ENCODE measurements at regions of chr7 and their contacts with region 1.

Region 1: GRCh38 chr7:50369143-50370026 is 64.9 kb downstream of the IKZF1 start:
- DNase-seq: peak; percentile 61
- H3K4me3 Mint-ChIP-seq: no peak overlapping the region
- H3K27ac Mint-ChIP-seq: peak overlapping the region; percentile 76
- H3K4me1 Mint-ChIP-seq: peaks cover 97% of the 10 kb centered on the region
- H3K27me3 Mint-ChIP-seq: no peaks in the 10 kb centered on the region

Region 2: GRCh38 chr7:50261593-50261992 is 107.8 kb before region 1 on chr7:
- CTCF ChIA-PET with region 1: no interaction called
- DNase-seq: peak; percentile 40
- H3K4me3 Mint-ChIP-seq: no peak overlapping the region
- H3K27ac Mint-ChIP-seq: peak overlapping the region; percentile 99
- H3K4me1 Mint-ChIP-seq: peaks cover 77% of the 10 kb centered on the region
- H3K27me3 Mint-ChIP-seq: no peaks in the 10 kb centered on the region

Region 3: DNA sequence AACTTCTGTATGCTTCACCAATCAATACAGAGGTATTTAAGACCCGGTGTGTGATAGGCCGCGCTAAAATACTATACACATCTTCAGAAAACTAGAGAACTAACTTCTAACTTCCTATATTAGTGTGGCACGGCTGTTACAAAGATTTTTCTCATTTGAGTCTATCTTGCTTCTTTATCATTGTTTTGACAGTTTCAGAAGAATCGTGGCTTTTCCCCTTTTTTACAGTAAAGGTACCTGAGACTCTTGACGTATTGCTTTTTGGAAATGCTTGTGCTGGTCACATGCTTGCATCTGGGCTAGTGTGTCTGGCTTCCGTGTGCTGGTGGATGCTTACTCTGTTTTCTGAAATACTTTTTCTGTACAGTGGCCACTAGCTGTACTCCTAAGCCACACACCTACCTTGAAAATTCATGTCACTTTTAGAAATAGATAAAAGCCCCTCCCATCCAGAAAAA is 52.1 kb before region 1 on chr7:
- CTCF ChIA-PET with region 1: interaction called, 29 read pairs
- DNase-seq: peak; percentile 69
- H3K4me3 Mint-ChIP-seq: peak overlapping the region; percentile 99
- H3K27ac Mint-ChIP-seq: peak overlapping the region; percentile 99
- H3K4me1 Mint-ChIP-seq: peaks cover 96% of the 10 kb centered on the region
- H3K27me3 Mint-ChIP-seq: no peaks in the 10 kb centered on the region

Measured in activated naive CD4-positive, alpha-beta T cell treated with anti-CD3 and anti-CD28 coated beads, Interleukin-2, amount 10 ng/mL, durations not matched to agents 7 days and 5 days (primary cell).